ENCODE measurements at regions of chr5 and their contacts with region 1.

Region 1: GRCh38 chr5:140327589-140327988 is 18.8 kb downstream of the HBEGF start:
- DNase-seq: no peak
- H3K4me3 Mint-ChIP-seq: no peak overlapping the region
- H3K27ac Mint-ChIP-seq: no peak overlapping the region
- H3K4me1 Mint-ChIP-seq: peaks cover 12% of the 10 kb centered on the region
- H3K27me3 Mint-ChIP-seq: peaks cover 3% of the 10 kb centered on the region

Region 2: DNA sequence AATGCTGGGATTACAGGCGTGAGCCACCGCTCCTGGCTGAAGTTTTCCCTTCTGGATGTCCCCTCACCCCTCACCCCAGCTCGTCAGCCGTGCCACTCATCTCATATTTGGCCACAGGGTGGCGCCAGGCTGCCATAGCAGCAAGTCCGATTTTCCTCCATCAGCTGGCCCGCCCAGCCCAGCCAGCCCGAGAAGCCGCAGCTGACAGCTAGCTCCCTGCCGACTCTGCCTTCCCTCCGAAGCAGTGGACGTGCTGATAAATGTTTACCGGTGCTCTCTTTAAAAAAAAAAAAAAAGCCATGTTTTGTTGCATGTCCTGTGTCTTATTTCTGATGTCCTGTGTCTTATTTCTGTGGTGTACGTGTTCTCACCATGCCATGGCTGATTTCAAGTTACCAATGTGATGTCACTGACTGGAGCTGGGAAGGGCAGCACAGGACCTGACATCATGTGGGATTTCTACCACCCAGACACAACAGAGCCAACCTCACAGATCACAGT is 83.0 kb before region 1 on chr5:
- intact Hi-C with region 1: no loop called
- DNase-seq: peak; percentile 95
- H3K4me3 Mint-ChIP-seq: peak overlapping the region; percentile 25
- H3K27ac Mint-ChIP-seq: peak overlapping the region; percentile 62
- H3K4me1 Mint-ChIP-seq: peaks cover 38% of the 10 kb centered on the region
- H3K27me3 Mint-ChIP-seq: no peaks in the 10 kb centered on the region

Region 3: DNA sequence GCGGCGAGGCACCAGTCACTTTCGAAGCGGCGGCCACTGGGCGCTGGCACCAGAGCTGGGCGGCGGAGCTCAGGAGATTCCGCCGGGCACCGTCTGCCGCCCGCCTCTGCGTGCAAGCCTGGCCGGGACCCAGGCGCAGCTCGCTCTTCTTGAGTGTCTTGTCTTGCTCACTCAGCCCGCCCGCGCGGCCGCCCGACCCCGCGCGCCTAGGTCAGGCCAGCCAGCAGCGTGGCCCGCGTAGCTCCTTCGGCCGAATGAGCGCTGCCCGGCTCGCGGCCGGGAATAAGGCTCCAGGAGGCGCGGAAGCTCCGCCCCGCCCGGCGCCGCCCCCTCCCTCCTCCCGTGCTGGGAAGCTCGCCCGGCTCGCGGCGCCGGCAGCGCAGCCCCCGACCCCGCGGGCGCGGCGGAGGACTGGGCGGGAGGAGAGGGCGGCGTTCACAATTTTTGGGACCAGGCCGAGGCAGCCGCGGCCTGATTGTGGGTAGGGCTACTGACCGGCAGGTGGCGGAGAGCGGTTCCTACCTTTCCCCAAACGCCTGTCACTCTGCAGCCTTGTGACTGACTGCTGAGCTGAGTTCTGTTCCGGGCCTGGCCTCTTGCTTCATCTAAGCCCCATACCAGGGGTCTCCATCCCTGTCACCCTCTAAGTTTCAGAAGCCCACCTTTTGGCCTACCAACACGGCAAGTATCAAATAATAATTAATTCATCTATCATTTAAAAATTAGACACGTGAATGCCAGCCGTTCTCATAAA is 18.9 kb after region 1 on chr5 and contains the start of gene HBEGF:
- intact Hi-C with region 1: loop called (anchors 2 kb)
- DNase-seq: peak; percentile 89
- H3K4me3 Mint-ChIP-seq: peak within 1 kb of the TSS; percentile 89
- H3K27ac Mint-ChIP-seq: peak within 1 kb of the TSS; percentile 78
- H3K4me1 Mint-ChIP-seq: peaks cover 61% of the 10 kb centered on the region
- H3K27me3 Mint-ChIP-seq: peaks cover 6% of the 10 kb centered on the region
- total RNA-seq, gene HBEGF: 21.9 and 22.5 TPM in 2 replicates

Measured in activated CD4-positive, alpha-beta T cell treated with anti-CD3 and anti-CD28 coated beads, Interleukin-2, amount 10 ng/mL, durations not matched to agents 24 days and 14 days (primary cell).